ENCODE measurements at regions of chr2 and their contacts with region 1.

Region 1: GRCh38 chr2:67397143-67397986 is at the start of gene ETAA1:
- DNase-seq: peak; percentile 97
- ATAC-seq: peak; percentile 100
- total RNA-seq, gene ETAA1: 4.6 TPM

Region 2: DNA sequence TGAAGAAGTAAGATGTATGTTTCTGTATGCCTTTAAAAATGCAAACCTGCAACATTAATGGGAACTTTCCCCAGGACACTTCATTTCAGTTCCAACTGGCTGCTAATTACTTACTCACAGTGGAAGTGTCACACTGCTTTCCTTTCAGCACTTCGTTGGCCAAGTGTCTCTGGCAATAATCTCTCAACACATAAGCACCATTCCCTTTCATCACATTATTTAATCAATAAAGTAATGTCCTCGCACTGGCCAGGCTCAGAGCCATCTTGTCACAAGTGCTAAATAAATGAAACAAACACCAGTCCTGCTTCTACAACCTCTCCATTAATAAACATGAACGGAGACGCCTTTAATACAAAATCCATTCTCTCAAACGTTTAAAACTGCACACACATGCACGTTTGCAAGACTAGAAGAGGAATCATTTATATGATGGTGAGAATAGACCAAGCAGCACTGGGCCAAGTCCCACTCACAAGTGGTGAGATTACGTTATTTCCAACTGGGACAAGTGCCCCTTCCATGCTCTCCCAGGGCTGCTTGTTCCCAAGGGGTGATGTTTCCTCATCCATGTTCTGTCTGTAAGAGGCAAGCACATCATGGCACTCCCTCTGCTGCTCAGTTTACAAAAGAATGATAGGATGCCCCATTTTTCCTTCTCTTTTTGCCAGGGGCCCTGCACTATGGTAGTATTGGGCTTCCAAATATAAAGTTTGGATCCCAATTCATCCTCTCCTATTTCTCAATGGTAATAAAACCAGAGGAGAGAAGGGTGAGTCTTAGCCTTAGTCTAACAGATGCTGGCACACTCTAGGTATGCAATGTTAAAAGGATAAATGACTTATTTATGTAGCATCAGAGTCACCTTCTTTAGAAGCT is 57.0 kb before region 1 on chr2:
- intact Hi-C with region 1: loop called (anchors 2 kb)
- DNase-seq: no peak
- ATAC-seq: peak; percentile 96